Lower lobe of right lung (tissue), 2 donors: ENCODE measurements at regions of chr17 and their contacts with region 1.

Region 1: GRCh38 chr17:62987137-62987536 is 21.1 kb downstream of the TANC2 start:
- DNase-seq: no peak
- ATAC-seq: peak in 1 of 2 donors; percentile 33
- H3K4me3 ChIP-seq: no peak overlapping the region
- H3K27ac ChIP-seq: no peak overlapping the region
- H3K4me1 ChIP-seq: no peaks in the 10 kb centered on the region
- H3K27me3 ChIP-seq: no peaks in the 10 kb centered on the region
- CTCF ChIP-seq: no peak

Region 2: DNA sequence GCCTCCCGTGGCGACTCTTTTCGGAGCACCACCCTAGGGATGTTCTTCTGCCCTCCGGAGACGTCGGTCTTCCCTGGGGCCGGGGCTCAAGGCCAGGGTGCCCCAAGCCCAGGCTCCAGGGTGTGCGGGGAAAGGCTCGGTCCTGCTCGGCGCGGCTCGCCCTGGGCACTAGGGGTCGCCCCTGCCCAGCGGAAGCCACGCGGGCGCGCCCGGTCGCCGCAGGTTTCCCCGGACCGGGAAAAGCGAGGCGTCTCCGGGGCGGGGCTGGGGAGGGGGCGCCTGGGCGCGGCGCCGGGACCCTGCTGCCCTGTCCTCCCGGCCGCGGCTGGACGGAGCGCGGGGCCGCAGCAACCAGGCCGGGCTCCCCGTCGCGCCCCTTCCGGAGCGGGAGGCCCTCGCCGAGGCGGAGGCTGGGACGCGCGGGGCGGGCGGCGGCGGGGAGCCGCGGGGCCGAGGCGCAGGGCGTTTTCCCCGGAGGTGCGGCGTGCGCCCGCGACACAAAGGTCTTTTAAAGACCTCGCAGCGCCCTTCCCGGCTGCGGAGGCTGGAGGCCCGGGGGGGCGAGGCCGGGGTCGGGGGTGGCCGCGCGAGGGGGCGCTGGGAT is 283.3 kb before region 1 on chr17:
- intact Hi-C with region 1: loop called (anchors 10 kb)
- DNase-seq: peak; percentile 87
- ATAC-seq: peak; percentile 96
- H3K4me3 ChIP-seq: peak overlapping the region; percentile 79
- H3K27ac ChIP-seq: peak overlapping the region; percentile 75
- H3K4me1 ChIP-seq: peaks cover 28% of the 10 kb centered on the region
- H3K27me3 ChIP-seq: no peaks in the 10 kb centered on the region
- CTCF ChIP-seq: peak; percentile 88